ENCODE measurements at regions of chr14 and their contacts with region 1.

Region 1: DNA sequence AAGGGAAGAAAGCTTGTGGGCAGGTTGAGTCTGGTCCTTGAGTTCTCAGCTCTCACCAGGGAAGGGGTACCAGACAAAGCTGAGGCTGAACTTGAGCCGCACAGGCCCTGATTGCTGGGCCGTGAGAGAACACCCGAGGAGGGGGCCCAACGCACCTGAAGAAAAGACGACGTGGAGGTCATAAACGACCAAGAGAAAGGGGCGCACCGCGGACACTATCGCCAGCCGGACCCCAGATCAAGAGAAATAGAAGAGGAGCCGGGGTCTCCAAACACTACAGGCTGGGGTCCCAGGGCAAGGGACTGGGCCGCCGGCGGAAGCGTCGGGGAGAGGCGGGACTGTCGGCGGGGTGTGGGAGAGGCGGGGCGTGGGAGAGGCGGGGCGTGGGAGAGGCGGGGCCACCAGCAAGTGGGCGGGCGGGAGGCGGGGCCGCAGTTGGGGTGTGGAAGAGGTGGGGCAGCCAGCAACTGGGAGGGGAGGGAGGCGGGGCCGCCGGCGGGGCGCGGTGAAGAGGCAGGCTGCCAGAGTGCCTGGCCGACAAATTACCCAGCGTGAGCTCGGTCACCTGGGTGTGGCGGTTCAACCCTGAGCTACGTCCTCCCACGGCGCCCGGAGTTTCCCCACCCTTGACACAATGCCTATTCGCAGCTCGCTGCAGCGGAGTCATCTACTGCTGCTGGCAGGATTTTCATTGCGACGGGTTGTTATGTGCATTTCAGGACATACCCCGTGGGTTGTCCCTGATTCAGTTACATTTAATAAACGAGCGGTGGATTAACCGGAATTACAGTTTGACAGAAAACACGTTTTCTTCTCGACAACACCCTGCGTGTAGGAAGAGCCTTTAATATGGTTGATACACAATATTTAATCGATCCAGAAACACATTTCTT is 15.5 kb upstream of the NEMF start:
- DNase-seq: peak; percentile 92 to 98 (median 96)
- H3K4me3 ChIP-seq: peak overlapping the region; percentile 47 to 54
- H3K4me3 Mint-ChIP-seq: peak overlapping the region; percentile 88 to 96 (median 92)
- H3K27ac ChIP-seq: peak overlapping the region; percentile 92
- H3K27ac Mint-ChIP-seq: peak overlapping the region; percentile 88 to 99 (median 98)
- H3K4me1 ChIP-seq: peaks cover 45% of the 10 kb centered on the region
- H3K4me1 Mint-ChIP-seq: peaks cover 12 to 21% (median 14%) of the 10 kb centered on the region in 4 donors
- H3K27me3 ChIP-seq: no peaks in the 10 kb centered on the region
- H3K27me3 Mint-ChIP-seq: no peaks in the 10 kb centered on the region

Region 2: DNA sequence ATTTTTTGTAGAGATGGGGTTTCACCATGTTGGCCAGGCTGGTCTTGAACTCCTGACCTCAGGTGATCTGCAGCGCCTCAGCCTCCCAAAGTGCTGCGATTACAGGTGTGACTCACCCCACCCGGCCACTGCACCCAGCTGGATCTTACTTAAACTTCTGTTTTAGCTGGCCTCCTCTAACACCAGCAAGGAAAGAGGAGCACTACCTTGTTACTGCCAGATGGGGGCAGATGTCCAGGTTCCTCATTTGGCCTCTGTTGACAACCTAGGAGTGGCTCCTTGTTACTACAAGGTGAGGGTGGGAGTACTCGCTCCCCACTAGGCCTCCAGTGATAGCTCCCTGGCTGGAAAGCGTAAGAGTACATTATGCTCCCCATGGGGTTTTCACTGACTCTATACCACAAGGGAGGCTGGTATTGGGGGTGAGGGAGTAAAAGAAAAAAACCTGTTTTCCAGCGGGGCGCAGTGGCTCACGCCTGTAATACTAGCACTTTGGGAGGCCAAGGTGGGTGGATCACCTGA is 11.7 kb after region 1 on chr14:
- CTCF ChIA-PET with region 1: interaction called, 68 read pairs
- POLR2A ChIA-PET with region 1: interaction called, 15 read pairs
- intact Hi-C with region 1: loop called (anchors 1 kb)
- DNase-seq: peak; percentile 63 to 72 (median 65)
- H3K4me3 ChIP-seq: no peak overlapping the region
- H3K4me3 Mint-ChIP-seq: no peak overlapping the region
- H3K27ac ChIP-seq: no peak overlapping the region
- H3K27ac Mint-ChIP-seq: peak overlapping the region; percentile 67 to 89 (median 82)
- H3K4me1 ChIP-seq: peaks cover 15% of the 10 kb centered on the region
- H3K4me1 Mint-ChIP-seq: peaks cover 6 to 12% (median 8%) of the 10 kb centered on the region in 4 donors
- H3K27me3 ChIP-seq: no peaks in the 10 kb centered on the region
- H3K27me3 Mint-ChIP-seq: no peaks in the 10 kb centered on the region

Region 3: GRCh38 chr14:49940808-49941421 is 72.8 kb after region 1 on chr14:
- CTCF ChIA-PET with region 1: interaction called, 21 read pairs
- POLR2A ChIA-PET with region 1: interaction called, 33 read pairs
- intact Hi-C with region 1: no loop called
- DNase-seq: peak in 4 of 5 donors; percentile 40 to 56 (median 48)
- H3K4me3 ChIP-seq: peak overlapping the region in 1 of 2 donors; percentile 15
- H3K4me3 Mint-ChIP-seq: peak overlapping the region; percentile 60 to 86 (median 68)
- H3K27ac ChIP-seq: peak overlapping the region; percentile 23
- H3K27ac Mint-ChIP-seq: peak overlapping the region; percentile 31 to 93 (median 88)
- H3K4me1 ChIP-seq: peaks cover 52% of the 10 kb centered on the region
- H3K4me1 Mint-ChIP-seq: peaks cover 44 to 72% (median 61%) of the 10 kb centered on the region in 4 donors
- H3K27me3 ChIP-seq: no peaks in the 10 kb centered on the region
- H3K27me3 Mint-ChIP-seq: no peaks in the 10 kb centered on the region

Region 4: DNA sequence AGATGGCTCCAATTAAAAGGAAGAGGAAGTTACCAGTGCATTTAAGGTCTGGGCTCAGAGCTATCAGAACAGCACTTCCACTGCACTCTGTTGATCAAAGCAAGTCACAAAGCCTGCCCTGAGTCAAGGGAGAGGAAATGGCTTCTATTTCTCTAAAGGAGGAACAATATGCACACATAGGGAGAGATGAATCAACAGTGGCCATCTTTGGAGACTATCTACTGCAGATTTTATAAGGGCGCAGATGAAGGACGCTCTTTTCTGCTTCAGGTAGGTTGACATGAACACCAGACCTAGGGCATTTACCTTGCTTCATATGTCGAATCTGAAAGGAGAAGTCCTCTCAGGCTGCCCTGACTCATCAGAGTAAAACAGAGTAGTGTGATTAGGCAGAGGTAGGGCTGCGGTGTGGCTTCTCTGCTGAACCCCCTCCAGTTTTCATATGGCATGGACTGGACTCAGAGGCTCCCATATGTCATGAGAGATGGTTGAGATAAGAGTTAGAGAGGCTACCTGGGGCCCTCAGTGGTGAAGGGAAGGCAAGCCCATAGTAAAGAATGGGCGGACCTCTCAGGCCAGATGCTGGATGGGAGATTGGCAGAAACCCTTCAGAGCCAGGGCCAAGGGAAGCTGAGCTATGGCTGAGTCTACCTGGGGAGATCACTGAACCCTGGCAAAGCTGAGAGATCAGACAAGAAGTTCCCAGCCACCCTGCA is 109.2 kb after region 1 on chr14:
- CTCF ChIA-PET with region 1: interaction called, 72 read pairs
- POLR2A ChIA-PET with region 1: interaction called, 81 read pairs
- intact Hi-C with region 1: loop called (anchors 1 kb)
- DNase-seq: peak; percentile 48 to 66 (median 61)
- H3K4me3 ChIP-seq: peak overlapping the region; percentile 50 to 53
- H3K4me3 Mint-ChIP-seq: peak overlapping the region; percentile 75 to 89 (median 84)
- H3K27ac ChIP-seq: peak overlapping the region; percentile 48
- H3K27ac Mint-ChIP-seq: peak overlapping the region; percentile 91 to 95 (median 93)
- H3K4me1 ChIP-seq: peaks cover 100% of the 10 kb centered on the region
- H3K4me1 Mint-ChIP-seq: peaks cover 60 to 96% (median 87%) of the 10 kb centered on the region in 4 donors
- H3K27me3 ChIP-seq: no peaks in the 10 kb centered on the region
- H3K27me3 Mint-ChIP-seq: no peaks in the 10 kb centered on the region

Region 5: GRCh38 chr14:50085570-50086320 is 217.7 kb after region 1 on chr14:
- CTCF ChIA-PET with region 1: interaction called, 58 read pairs
- POLR2A ChIA-PET with region 1: interaction called, 81 read pairs
- intact Hi-C with region 1: loop called (anchors 2 kb)
- DNase-seq: peak; percentile 21 to 48 (median 28)
- H3K4me3 ChIP-seq: no peak overlapping the region
- H3K4me3 Mint-ChIP-seq: peak overlapping the region; percentile 23 to 78 (median 71)
- H3K27ac ChIP-seq: peak overlapping the region; percentile 99
- H3K27ac Mint-ChIP-seq: peak overlapping the region; percentile 83 to 99 (median 95)
- H3K4me1 ChIP-seq: peaks cover 88% of the 10 kb centered on the region
- H3K4me1 Mint-ChIP-seq: peaks cover 58 to 89% (median 76%) of the 10 kb centered on the region in 4 donors
- H3K27me3 ChIP-seq: no peaks in the 10 kb centered on the region
- H3K27me3 Mint-ChIP-seq: no peaks in the 10 kb centered on the region

Region 6: DNA sequence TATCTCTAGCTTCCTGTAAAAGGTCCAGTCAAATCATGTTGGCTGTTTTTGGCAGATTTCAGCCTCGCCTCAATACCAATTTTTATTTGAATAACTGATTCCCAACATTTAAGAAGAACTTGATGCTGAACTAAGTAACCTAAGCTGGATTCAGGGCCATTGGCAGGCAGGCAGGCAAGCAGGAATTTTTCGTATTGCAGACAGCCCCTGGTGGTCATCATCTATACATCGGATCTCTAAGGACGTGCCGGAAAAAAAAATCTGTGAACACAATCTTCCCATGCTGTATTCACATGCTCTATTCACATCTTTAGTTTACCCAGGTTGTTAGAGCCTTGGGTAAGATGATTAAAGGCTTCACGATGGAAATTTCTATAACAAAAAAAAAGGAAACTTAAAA is 241.3 kb after region 1 on chr14:
- CTCF ChIA-PET with region 1: interaction called, 189 read pairs
- POLR2A ChIA-PET with region 1: interaction called, 151 read pairs
- intact Hi-C with region 1: loop called (anchors 1 kb)
- DNase-seq: no peak
- H3K4me3 ChIP-seq: no peak overlapping the region
- H3K4me3 Mint-ChIP-seq: no peak overlapping the region
- H3K27ac ChIP-seq: no peak overlapping the region
- H3K27ac Mint-ChIP-seq: peak overlapping the region in 5 of 7 donors; percentile 19 to 56 (median 37)
- H3K4me1 ChIP-seq: peaks cover 15% of the 10 kb centered on the region
- H3K4me1 Mint-ChIP-seq: peaks cover 6 to 25% (median 14%) of the 10 kb centered on the region in 4 donors
- H3K27me3 ChIP-seq: no peaks in the 10 kb centered on the region
- H3K27me3 Mint-ChIP-seq: no peaks in the 10 kb centered on the region

Measured in CD4-positive, alpha-beta memory T cell (primary cell).